ENCODE measurements at regions of chr17 and their contacts with region 1.

Region 1: GRCh38 chr17:54046570-54046969 is 223.8 kb downstream of the KIF2B start:
- DNase-seq: no peak
- ATAC-seq: no peak

Region 2: DNA sequence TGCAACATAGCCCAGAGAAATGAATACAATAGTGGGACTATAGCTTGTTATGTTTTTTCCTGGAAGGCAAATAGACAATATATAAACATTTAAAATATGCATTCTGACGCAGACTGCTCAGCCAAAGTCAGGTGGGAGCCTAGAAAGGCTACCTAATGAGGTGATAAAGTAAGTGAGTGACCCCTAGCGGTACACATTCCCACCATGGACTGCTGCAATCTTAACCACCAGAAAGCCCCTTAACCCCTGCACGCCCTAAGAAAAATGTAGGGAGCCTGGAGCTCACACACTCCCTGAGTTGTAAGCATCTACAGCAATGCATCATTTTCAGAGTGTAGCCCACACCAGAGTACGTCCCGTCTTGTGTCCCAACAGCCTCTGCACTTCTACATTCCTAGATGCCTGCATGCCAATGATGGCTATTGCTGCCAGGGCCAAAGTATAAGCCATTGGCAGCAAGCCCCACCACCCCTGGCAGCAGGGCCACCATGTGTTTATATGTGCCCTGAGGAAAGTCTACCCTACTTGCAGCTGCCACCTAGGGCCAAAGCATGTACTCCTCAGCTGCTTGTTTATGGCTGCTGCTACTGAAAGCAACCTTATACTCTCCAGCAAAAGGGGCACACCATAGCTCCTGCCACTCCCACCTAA is 96.2 kb before region 1 on chr17:
- intact Hi-C with region 1: no loop called
- DNase-seq: no peak
- ATAC-seq: no peak

Region 3: GRCh38 chr17:54102246-54102645 is 55.7 kb after region 1 on chr17:
- intact Hi-C with region 1: loop called (anchors 10 kb)
- DNase-seq: no peak
- ATAC-seq: no peak